K562 (cell line): ENCODE measurements at regions of chr1 and their contacts with region 1.

Region 1: GRCh38 chr1:90045853-90046563 is 51.1 kb downstream of the ZNF326 start:
- DNase-seq: peak; percentile 33 to 54 (median 43)
- ATAC-seq: peak; percentile 89
- H3K4me3 ChIP-seq: no peak overlapping the region
- H3K27ac ChIP-seq: no peak overlapping the region
- H3K4me1 ChIP-seq: no peaks in the 10 kb centered on the region
- H3K27me3 ChIP-seq: peaks cover 12 to 20% of the 10 kb centered on the region in 2 experiments
- CTCF ChIP-seq: peak; percentile 64 to 86 (median 78)
- EP300 ChIP-seq: no peak
- POLR2A ChIP-seq: no peak
- RAD21 ChIP-seq: peak; percentile 51 to 80

Region 2: DNA sequence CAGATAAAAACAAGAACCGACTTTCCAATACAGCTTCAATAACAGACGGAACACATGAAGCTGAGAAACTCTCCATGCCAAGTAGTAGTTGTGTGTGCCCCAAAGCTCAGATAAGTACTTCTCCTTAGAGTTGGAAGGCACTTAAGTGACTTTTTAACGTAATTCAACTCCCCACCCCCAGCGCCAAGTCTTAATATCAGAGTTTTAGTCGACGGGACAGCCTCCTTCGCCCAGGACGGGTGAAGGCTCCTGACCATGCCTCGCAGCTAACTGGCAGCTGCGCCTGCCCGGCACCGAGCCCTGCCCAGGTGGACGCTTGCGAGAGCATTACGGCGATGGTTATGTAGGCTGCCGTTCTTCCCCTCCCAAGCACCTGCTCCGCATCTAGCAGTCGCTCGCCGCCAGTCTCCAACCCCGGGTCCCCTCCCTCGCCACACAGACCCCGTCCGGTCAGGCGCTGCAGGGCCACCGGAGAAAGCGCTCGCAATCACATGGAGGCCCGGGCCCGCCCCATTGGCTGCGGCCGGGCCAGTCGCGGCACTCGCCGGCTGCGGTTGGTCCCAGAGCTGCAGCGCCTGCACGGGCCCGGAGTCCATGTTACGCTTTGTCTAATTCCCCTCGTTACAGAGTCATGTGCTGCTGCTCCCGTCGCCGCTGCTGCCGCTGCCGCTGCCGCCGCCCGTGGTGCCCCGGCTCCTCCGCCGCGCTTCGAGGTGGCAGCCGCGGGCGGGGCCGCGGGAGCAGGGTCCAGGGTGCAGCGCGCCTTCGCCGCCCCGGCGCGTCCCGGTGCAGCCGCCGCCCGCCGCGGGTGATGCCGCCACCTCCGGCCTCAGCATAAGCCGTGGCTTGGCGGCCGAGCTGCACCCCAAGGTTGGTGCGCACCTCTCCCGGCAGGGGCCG is 225.3 kb before region 1 on chr1 and contains the start of gene LRRC8D:
- CTCF ChIA-PET with region 1: no interaction called
- POLR2A ChIA-PET with region 1: no interaction called
- in situ Hi-C with region 1: no loop called
- intact Hi-C with region 1: no loop called
- DNase-seq: peak; percentile 85 to 89 (median 88)
- ATAC-seq: peak; percentile 81
- H3K4me3 ChIP-seq: peak within 1 kb of the TSS; percentile 77
- H3K27ac ChIP-seq: peak within 1 kb of the TSS; percentile 85
- H3K4me1 ChIP-seq: peaks cover 18 to 22% of the 10 kb centered on the region in 2 experiments; a peak in 4 of 5 replicates
- H3K27me3 ChIP-seq: no peaks in the 10 kb centered on the region
- CTCF ChIP-seq: 0 out of 6 replicates have a peak, but pooled peaks of 1 of the 3 experiments have one; percentile 6
- EP300 ChIP-seq: no peak
- POLR2A ChIP-seq: peak; percentile 62
- RAD21 ChIP-seq: no peak
- polyA plus RNA-seq, gene LRRC8D: 3.4 to 7.8 TPM

Region 3: GRCh38 chr1:90114521-90115141 is 68.6 kb after region 1 on chr1:
- CTCF ChIA-PET with region 1: no interaction called
- POLR2A ChIA-PET with region 1: no interaction called
- in situ Hi-C with region 1: no loop called
- intact Hi-C with region 1: loop called (anchors 5 kb)
- DNase-seq: peak; percentile 27 to 60 (median 38)
- ATAC-seq: peak; percentile 74
- H3K4me3 ChIP-seq: no peak overlapping the region
- H3K27ac ChIP-seq: no peak overlapping the region
- H3K4me1 ChIP-seq: no peaks in the 10 kb centered on the region
- H3K27me3 ChIP-seq: no peaks in the 10 kb centered on the region; a peak in 1 of 5 replicates
- CTCF ChIP-seq: peak; percentile 51 to 76 (median 55); a peak in 5 of 6 replicates
- EP300 ChIP-seq: no peak
- POLR2A ChIP-seq: no peak
- RAD21 ChIP-seq: peak; percentile 73 to 88